ENCODE measurements at regions of chr15 and their contacts with region 1.

Region 1: GRCh38 chr15:32659340-32660155 is 18.0 kb downstream of the SCG5 start:
- H3K4me3 Mint-ChIP-seq: no peak overlapping the region
- H3K27ac Mint-ChIP-seq: no peak overlapping the region
- H3K4me1 Mint-ChIP-seq: peaks cover 5% of the 10 kb centered on the region
- H3K27me3 Mint-ChIP-seq: no peaks in the 10 kb centered on the region

Region 2: DNA sequence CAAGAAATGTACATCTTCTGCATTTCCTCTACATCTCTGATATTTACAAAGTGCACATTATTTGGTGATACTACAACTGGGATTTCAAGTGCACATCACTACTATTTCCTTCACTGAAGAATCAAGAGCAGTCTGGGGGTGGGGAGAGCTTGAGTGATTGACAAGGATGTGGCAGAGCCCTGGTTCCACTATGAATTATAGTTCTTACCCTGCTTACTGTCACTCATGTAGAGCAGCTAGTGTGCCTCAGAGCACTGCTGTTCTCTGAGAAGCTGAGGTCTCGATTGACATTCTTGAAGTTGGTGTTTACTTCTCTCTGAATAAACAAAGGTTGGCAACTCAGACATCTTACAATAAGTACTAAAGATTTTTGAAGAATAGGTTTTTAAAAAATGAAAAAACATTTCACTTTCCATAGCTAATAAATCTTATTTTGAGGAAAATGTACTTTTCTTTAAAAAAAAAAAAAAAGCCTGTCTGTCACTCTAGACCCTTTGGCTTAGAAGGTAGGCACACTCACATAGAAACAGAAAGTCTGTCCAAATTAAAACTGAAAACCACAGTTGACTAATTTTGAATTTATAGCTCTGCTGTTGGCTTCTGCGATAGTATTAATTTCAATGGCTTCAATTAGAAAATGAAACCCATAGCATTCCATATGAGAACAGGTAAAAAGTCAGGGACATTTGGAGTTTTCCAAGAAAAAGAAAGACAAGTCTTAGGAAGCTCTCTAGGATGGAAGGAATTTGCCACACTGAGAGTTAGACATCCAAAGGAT is 63.8 kb after region 1 on chr15:
- intact Hi-C with region 1: loop called (anchors 10 kb)
- H3K4me3 Mint-ChIP-seq: no peak overlapping the region
- H3K27ac Mint-ChIP-seq: no peak overlapping the region
- H3K4me1 Mint-ChIP-seq: peaks cover 9% of the 10 kb centered on the region
- H3K27me3 Mint-ChIP-seq: peaks cover 64% of the 10 kb centered on the region

Region 3: DNA sequence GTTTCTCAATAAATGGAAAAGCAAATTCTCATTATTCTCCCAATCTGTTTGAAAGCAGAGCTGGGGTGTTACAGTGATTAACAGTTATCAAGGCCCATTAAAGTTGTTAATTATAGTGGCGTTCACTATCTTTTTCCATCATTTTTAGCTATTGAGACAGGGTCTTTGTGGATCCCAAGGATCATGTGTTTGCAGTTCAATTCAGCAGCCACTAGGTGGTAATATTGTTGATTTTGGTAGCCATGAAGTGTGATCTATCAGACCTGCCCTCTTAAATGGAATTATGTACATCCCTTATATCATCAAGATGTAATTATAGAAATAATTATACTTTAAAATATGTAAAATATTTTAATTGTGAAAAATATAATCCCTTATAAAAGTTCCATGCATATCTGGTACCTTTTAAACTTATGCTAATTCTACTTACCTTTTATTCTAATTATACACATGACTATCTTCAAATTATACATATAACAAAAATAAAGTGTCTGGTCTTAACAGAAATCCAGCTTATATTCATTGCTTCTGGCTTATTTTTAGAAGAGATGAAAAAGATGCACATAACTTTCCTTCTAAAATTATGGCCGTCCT is 184.7 kb after region 1 on chr15:
- intact Hi-C with region 1: loop called (anchors 10 kb)
- H3K4me3 Mint-ChIP-seq: no peak overlapping the region
- H3K27ac Mint-ChIP-seq: no peak overlapping the region
- H3K4me1 Mint-ChIP-seq: no peaks in the 10 kb centered on the region
- H3K27me3 Mint-ChIP-seq: no peaks in the 10 kb centered on the region

Region 4: DNA sequence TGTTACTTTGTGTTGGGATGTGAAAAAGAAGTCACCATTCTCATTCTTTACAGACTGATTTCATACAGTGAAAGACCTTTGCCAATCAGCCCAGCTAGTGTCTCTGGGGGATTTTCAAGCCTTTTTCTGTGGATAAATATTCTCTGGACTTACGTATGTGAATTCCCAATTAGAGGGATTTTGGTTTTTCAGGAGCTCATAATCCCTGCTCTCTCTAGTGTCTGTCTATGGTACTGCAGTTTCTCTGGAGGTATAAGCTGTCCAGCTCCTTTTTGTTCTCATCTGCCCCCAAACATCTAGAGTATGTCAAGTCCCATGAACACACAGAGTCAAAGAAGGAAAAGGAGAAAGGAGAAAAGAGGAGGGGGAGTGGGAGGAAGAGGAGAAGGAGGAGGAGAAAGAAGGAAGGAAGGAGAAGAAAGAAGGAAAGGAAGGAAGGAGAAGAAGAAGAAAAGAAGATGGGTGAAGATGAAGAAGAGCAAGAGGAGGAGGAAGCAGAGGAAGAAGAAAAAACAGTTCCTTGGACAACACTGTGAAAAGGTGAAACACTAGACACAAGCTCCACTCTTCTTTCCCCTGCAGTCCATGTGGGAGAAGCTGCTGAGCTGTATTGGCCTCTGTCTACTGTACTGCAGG is 276.9 kb after region 1 on chr15:
- intact Hi-C with region 1: loop called (anchors 2 kb)
- H3K4me3 Mint-ChIP-seq: no peak overlapping the region
- H3K27ac Mint-ChIP-seq: no peak overlapping the region
- H3K4me1 Mint-ChIP-seq: no peaks in the 10 kb centered on the region
- H3K27me3 Mint-ChIP-seq: peaks cover 6% of the 10 kb centered on the region

Region 5: DNA sequence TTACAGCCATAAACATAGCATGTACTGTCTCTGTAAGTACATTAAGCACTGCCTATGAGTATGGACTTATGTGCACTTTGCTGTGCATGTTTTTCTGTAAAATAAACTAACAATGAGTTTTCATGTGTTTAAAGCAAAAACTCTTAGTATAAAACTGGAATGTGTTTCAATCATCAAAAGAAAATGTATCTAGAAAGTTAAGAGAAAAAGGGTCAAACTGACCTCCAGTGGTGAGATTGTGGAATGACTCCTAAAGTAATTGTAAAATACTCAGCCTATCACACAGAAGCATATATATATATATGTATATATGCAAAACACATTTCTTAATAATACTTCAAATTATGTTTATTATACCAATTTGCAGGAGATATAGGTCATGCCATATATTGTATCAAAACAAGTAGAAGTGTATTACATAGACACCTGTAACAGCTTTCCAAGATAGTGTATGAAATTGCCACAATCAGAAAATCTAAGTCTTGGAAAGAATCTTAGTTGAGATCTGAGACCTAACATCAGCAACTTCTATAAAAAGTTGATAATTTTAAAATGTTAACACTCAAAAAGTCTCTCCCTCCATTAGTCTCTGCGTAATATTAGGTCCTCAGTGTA is 335.4 kb after region 1 on chr15:
- intact Hi-C with region 1: loop called (anchors 2 kb)
- H3K4me3 Mint-ChIP-seq: no peak overlapping the region
- H3K27ac Mint-ChIP-seq: no peak overlapping the region
- H3K4me1 Mint-ChIP-seq: no peaks in the 10 kb centered on the region
- H3K27me3 Mint-ChIP-seq: no peaks in the 10 kb centered on the region